Testis (tissue), 5 donors: ENCODE measurements at regions of chr11 and their contacts with region 1.

Region 1: DNA sequence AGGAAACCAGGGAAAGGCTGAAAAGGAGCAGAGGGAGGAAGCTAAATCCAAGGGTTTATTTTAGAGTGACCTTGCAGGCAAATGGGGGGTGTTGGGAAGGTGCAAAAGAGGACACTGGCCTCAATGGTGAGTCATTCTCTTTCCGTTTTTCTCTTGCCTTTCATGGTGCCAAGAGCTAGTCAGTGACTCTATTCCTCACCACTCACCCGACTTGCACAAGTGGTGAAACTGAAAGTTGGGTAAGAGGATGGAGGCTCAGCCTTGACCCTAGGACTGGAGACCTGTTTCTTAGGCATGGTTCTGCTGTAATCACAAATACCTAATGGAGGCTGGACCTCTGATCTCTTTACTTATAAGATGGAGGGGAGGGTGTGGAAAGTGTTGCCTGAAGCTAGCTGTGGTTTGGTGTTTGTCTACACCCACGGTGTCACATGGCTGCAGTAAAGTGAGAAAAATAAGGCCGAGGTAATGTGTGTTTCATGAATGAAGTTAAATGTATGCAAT is 67.3 kb upstream of the CREB3L1 start:
- DNase-seq: no peak
- H3K4me3 ChIP-seq: no peak overlapping the region
- H3K27ac ChIP-seq: no peak overlapping the region
- H3K4me1 ChIP-seq: no peaks in the 10 kb centered on the region
- H3K27me3 ChIP-seq: no peaks in the 10 kb centered on the region
- CTCF ChIP-seq: no peak
- POLR2A ChIP-seq: no peak

Region 2: DNA sequence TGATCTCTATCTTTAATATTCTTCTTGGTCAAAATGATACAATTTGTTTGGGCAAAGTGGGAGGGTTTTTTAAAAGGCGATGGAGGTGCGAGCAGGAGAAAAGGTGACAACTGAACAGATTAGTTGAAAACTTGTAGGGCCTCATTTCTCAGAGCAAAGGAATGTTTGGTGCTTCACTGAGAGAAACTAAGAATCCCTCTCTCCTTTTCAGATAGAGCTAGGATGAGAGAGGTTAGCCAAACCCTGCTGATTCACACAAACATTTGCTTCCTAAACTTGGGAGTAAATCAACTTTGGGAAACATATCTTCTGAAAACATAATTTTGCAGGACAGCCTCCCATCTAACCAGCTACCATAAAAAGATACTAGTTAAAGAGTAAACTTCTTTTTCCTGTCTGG is 146.0 kb before region 1 on chr11:
- intact Hi-C with region 1: no loop called
- DNase-seq: no peak
- H3K4me3 ChIP-seq: no peak overlapping the region
- H3K27ac ChIP-seq: no peak overlapping the region
- H3K4me1 ChIP-seq: no peaks in the 10 kb centered on the region
- H3K27me3 ChIP-seq: no peaks in the 10 kb centered on the region
- CTCF ChIP-seq: no peak
- POLR2A ChIP-seq: no peak

Region 3: DNA sequence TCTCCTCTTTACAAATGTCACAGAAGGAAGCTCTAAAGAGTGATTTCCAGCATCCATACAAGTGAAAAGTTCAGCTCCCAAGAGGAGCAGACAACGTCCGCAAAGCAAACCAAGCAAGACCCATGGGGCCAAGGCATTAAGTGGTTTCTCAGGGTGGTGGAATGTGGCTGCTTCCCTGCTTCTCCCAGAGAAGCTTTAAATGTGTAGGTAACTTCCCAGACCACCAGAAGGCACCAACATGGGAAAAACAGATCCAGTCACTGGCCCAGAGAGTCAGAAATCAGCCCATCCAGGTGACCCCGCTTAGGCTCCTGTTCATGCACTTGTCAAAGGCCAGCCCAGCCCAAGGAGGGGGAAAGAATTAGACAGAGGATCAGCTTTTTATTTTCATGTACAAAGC is 75.6 kb before region 1 on chr11:
- intact Hi-C with region 1: loop called (anchors 10 kb)
- DNase-seq: no peak
- H3K4me3 ChIP-seq: no peak overlapping the region
- H3K27ac ChIP-seq: no peak overlapping the region
- H3K4me1 ChIP-seq: no peaks in the 10 kb centered on the region
- H3K27me3 ChIP-seq: no peaks in the 10 kb centered on the region
- CTCF ChIP-seq: no peak
- POLR2A ChIP-seq: no peak

Region 4: DNA sequence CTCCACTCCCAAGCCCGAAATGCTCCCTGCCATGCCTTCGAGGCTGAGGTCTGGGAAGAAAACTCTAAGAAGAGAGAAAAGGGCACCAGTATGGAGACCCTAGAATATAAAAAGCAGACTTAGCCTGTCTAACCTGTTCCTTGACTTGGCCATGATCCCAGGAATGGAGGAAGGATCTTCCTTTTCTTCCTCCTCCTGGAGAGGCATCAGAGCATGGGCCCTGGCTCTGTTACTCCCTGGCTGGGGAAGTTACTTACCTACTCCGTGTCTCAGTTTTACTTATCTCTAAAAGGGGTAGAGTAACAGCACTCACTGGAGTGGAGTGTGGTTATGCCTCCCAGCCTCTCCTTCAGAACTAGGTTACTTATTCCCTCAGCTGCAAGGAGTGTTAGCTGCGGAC is 33.8 kb before region 1 on chr11:
- intact Hi-C with region 1: no loop called
- DNase-seq: no peak
- H3K4me3 ChIP-seq: no peak overlapping the region
- H3K27ac ChIP-seq: no peak overlapping the region
- H3K4me1 ChIP-seq: no peaks in the 10 kb centered on the region
- H3K27me3 ChIP-seq: no peaks in the 10 kb centered on the region
- CTCF ChIP-seq: no peak
- POLR2A ChIP-seq: no peak